ENCODE measurements at regions of chr3 and their contacts with region 1.

Region 1: DNA sequence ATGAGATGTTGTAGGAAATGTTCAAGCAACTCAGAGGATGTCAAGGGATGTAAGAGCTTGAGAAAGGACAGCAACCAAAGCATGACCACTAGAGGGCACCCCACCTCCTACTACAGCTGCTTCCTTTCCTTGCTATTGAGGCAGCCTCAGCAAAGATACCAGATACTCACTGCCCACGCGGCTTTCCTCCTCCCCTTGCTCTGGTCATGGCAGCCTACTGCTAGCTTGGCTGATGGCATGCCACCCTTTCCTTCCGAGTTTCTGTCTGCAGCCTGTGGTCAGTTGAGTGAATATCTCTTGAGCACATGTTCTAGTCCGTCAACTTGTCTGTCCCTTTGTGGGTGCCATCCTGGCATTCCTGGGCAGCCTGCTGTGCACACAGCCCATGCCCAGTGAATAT is 4.4 kb upstream of the CXCR6 start:
- DNase-seq: peak; percentile 77
- H3K4me3 Mint-ChIP-seq: no peak overlapping the region
- H3K27ac Mint-ChIP-seq: peak overlapping the region; percentile 0
- H3K4me1 Mint-ChIP-seq: peaks cover 53% of the 10 kb centered on the region
- H3K27me3 Mint-ChIP-seq: no peaks in the 10 kb centered on the region

Region 2: GRCh38 chr3:45881078-45882022 is 57.5 kb before region 1 on chr3:
- intact Hi-C with region 1: no loop called
- DNase-seq: no peak
- H3K4me3 Mint-ChIP-seq: no peak overlapping the region
- H3K27ac Mint-ChIP-seq: peak overlapping the region; percentile 3
- H3K4me1 Mint-ChIP-seq: peaks cover 24% of the 10 kb centered on the region
- H3K27me3 Mint-ChIP-seq: peaks cover 42% of the 10 kb centered on the region

Region 3: GRCh38 chr3:45915518-45916231 is 23.2 kb before region 1 on chr3:
- intact Hi-C with region 1: loop called (anchors 1 kb)
- DNase-seq: peak; percentile 65
- H3K4me3 Mint-ChIP-seq: peak overlapping the region; percentile 58
- H3K27ac Mint-ChIP-seq: peak overlapping the region; percentile 83
- H3K4me1 Mint-ChIP-seq: peaks cover 33% of the 10 kb centered on the region
- H3K27me3 Mint-ChIP-seq: peaks cover 30% of the 10 kb centered on the region

Region 4: GRCh38 chr3:45927881-45928280 is 11.0 kb before region 1 on chr3:
- intact Hi-C with region 1: no loop called
- DNase-seq: no peak
- H3K4me3 Mint-ChIP-seq: no peak overlapping the region
- H3K27ac Mint-ChIP-seq: no peak overlapping the region
- H3K4me1 Mint-ChIP-seq: no peaks in the 10 kb centered on the region
- H3K27me3 Mint-ChIP-seq: no peaks in the 10 kb centered on the region

Region 5: GRCh38 chr3:45978006-45978761 is 39.3 kb after region 1 on chr3:
- intact Hi-C with region 1: loop called (anchors 1 kb)
- DNase-seq: peak; percentile 72
- H3K4me3 Mint-ChIP-seq: peak overlapping the region; percentile 86
- H3K27ac Mint-ChIP-seq: peak overlapping the region; percentile 98
- H3K4me1 Mint-ChIP-seq: peaks cover 89% of the 10 kb centered on the region
- H3K27me3 Mint-ChIP-seq: no peaks in the 10 kb centered on the region

Region 6: GRCh38 chr3:46017720-46018119 is 78.9 kb after region 1 on chr3:
- intact Hi-C with region 1: loop called (anchors 2 kb)
- DNase-seq: no peak
- H3K4me3 Mint-ChIP-seq: peak overlapping the region; percentile 21
- H3K27ac Mint-ChIP-seq: peak overlapping the region; percentile 80
- H3K4me1 Mint-ChIP-seq: peaks cover 58% of the 10 kb centered on the region
- H3K27me3 Mint-ChIP-seq: peaks cover 4% of the 10 kb centered on the region

Region 7: GRCh38 chr3:46078712-46079400 is 140.0 kb after region 1 on chr3:
- intact Hi-C with region 1: loop called (anchors 1 kb)
- DNase-seq: peak; percentile 82
- H3K4me3 Mint-ChIP-seq: no peak overlapping the region
- H3K27ac Mint-ChIP-seq: no peak overlapping the region
- H3K4me1 Mint-ChIP-seq: peaks cover 74% of the 10 kb centered on the region
- H3K27me3 Mint-ChIP-seq: peaks cover 7% of the 10 kb centered on the region

Region 8: DNA sequence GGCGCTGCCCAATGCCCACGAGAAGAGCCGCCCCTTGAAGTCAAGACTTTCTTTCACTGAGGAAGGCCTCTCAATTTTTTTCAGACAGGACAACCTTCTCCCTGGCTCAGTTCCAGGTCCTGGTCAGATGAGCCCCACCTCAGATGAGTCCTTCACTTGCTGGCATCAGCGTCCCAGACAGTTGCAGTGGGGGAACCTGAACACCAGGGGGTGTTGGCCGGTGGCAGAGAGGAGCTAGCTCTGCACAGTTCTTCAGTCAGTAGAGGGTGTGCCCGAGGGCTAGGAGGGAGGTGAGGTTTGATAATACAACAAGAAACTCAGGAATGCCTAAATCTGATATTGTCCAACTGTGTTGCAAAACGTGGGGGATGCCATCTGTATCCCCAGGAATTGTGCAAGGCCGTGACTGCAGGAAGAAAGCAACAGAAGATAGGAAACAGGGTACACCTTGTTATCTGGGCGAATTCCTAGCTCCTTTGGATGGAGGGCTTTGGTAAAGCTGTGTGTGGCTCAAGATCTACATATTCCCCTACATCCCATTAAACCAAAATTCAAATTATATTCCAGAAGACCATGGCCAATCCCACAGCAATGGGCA is 337.7 kb after region 1 on chr3:
- intact Hi-C with region 1: loop called (anchors 5 kb)
- DNase-seq: peak; percentile 68
- H3K4me3 Mint-ChIP-seq: no peak overlapping the region
- H3K27ac Mint-ChIP-seq: peak overlapping the region; percentile 21
- H3K4me1 Mint-ChIP-seq: peaks cover 62% of the 10 kb centered on the region
- H3K27me3 Mint-ChIP-seq: peaks cover 11% of the 10 kb centered on the region

Region 9: GRCh38 chr3:46442576-46443562 is 504.0 kb after region 1 on chr3:
- intact Hi-C with region 1: loop called (anchors 2 kb)
- DNase-seq: peak; percentile 31
- H3K4me3 Mint-ChIP-seq: no peak overlapping the region
- H3K27ac Mint-ChIP-seq: no peak overlapping the region
- H3K4me1 Mint-ChIP-seq: peaks cover 25% of the 10 kb centered on the region
- H3K27me3 Mint-ChIP-seq: peaks cover 4% of the 10 kb centered on the region